ENCODE measurements at regions of chr3 and their contacts with region 1.

Region 1: GRCh38 chr3:50611464-50612233 is at the start of gene CISH:
- DNase-seq: peak; percentile 96 to 98 (median 97)
- ATAC-seq: peak; percentile 80 to 86 (median 82)
- H3K4me3 ChIP-seq: peak within 1 kb of the TSS; percentile 56 to 95 (median 80)
- H3K27ac ChIP-seq: peak within 1 kb of the TSS; percentile 77 to 100 (median 92)
- H3K4me1 ChIP-seq: peaks cover 5 to 81% (median 63%) of the 10 kb centered on the region in 12 donors
- H3K27me3 ChIP-seq: no peaks in the 10 kb centered on the region
- CTCF ChIP-seq: peak; percentile 7 to 59 (median 34)
- POLR2A ChIP-seq: peak; percentile 21 to 56
- total RNA-seq, gene CISH: 10.1 to 57.0 (median 20.3) TPM

Region 2: DNA sequence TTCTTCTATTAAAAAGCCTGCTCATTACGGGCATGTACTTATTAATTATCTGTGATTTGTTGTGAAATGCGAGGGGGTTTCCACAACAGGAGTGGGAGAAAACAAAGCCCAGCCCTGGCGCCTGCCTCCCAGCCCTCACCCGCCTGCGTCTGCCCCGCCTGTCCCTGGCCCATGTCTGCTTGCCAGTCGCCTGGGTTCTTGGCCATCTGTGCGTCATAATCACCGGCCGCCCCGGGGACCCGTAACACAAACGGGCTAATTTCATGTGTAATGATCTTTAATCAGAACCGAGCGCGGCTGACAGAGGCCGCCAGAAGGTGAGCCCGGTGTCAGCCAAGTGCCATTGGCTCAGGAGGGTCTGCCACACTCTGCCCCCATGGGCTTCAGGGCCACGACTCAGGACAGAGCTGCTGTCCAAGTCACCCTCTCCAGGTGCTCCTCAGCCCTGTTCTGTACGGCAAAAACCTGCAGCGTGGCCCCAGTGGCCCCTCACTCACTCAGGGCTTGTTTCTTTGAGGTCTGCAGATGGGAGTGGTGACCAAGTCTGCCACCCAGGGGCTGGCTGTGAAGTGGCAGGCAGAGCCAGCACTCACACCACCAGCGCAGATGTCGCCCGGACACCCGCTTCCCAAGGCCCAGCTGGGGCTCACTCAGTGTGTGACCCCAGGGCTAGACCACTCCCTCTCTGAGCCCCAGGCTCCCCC is 223.5 kb before region 1 on chr3:
- intact Hi-C with region 1: no loop called
- DNase-seq: no peak
- ATAC-seq: no peak
- H3K4me3 ChIP-seq: no peak overlapping the region
- H3K27ac ChIP-seq: no peak overlapping the region
- H3K4me1 ChIP-seq: peaks cover 3 to 31% (median 16%) of the 10 kb centered on the region in 12 donors
- H3K27me3 ChIP-seq: no peaks in the 10 kb centered on the region
- CTCF ChIP-seq: peak in 2 of 12 donors; percentile 7 to 19
- POLR2A ChIP-seq: no peak

Region 3: GRCh38 chr3:50436114-50436674 is 175.5 kb before region 1 on chr3:
- intact Hi-C with region 1: loop called in 4 of 10 experiments (anchors 5 to 10 kb)
- DNase-seq: peak; percentile 52 to 84 (median 63)
- ATAC-seq: peak; percentile 76 to 88 (median 83)
- H3K4me3 ChIP-seq: no peak overlapping the region
- H3K27ac ChIP-seq: no peak overlapping the region
- H3K4me1 ChIP-seq: peaks cover 0 to 6% (median 2%) of the 10 kb centered on the region in 12 donors
- H3K27me3 ChIP-seq: no peaks in the 10 kb centered on the region
- CTCF ChIP-seq: peak; percentile 71 to 93 (median 85)
- POLR2A ChIP-seq: no peak

Region 4: DNA sequence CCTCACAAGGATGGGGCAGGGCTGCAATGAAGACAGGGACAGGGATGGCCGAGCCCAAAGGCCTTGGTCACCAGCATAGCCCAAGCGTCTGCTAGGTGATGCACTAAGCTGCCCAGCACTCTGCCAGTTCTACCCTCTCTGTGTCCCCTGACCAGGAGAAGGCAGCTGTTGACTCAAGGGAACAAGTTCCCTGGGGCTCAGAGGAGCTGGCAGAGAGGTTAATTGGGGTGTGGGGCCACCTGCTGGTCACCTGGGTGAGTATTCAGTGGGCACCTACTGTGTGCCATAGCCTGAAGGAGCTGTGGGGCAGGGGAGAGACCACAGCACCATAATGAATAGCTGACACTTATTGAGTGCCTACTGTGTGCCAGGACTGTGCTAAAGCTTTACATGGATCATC is 41.1 kb after region 1 on chr3:
- intact Hi-C with region 1: loop called in 6 of 10 experiments (anchors 1 to 5 kb)
- DNase-seq: peak in 3 of 5 donors; percentile 41 to 59 (median 56)
- ATAC-seq: peak in 3 of 4 donors; percentile 9 to 40 (median 14)
- H3K4me3 ChIP-seq: no peak overlapping the region
- H3K27ac ChIP-seq: peak overlapping the region in 6 of 12 donors; percentile 0 to 97 (median 84)
- H3K4me1 ChIP-seq: peaks cover 0 to 48% (median 19%) of the 10 kb centered on the region in 12 donors
- H3K27me3 ChIP-seq: no peaks in the 10 kb centered on the region
- CTCF ChIP-seq: peak in 11 of 12 donors; percentile 34 to 60 (median 44)
- POLR2A ChIP-seq: no peak

Region 5: DNA sequence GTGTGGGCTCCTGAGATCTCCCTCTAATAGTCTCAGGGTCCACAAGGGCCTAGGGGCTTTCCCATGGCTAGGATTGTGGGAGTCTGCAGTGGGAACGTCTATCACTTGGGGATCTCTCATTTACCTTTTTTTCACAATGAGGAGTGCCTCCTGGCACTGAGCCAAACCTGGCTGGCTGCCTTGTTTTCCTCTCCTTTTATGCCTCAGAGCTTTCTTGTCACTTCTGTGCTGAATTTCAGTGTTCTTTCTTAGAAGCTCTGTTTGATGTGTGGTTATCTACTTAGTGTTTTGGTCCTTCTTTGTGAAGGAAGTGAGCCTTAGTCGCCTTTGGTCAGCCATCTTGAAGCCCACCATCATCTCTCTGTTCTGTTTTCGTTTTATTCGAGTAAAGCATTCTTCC is 97.0 kb after region 1 on chr3:
- intact Hi-C with region 1: no loop called
- DNase-seq: no peak
- ATAC-seq: no peak
- H3K4me3 ChIP-seq: no peak overlapping the region
- H3K27ac ChIP-seq: no peak overlapping the region
- H3K4me1 ChIP-seq: peaks cover 0 to 10% (median 0%) of the 10 kb centered on the region in 12 donors
- H3K27me3 ChIP-seq: no peaks in the 10 kb centered on the region
- CTCF ChIP-seq: no peak
- POLR2A ChIP-seq: no peak

Region 6: GRCh38 chr3:51371943-51372557 is 760.4 kb after region 1 on chr3:
- intact Hi-C with region 1: loop called in 8 of 10 experiments (anchors 5 kb)
- DNase-seq: no peak
- ATAC-seq: peak in 1 of 4 donors; percentile 17
- H3K4me3 ChIP-seq: no peak overlapping the region
- H3K27ac ChIP-seq: no peak overlapping the region
- H3K4me1 ChIP-seq: no peaks in the 10 kb centered on the region
- H3K27me3 ChIP-seq: no peaks in the 10 kb centered on the region
- CTCF ChIP-seq: peak; percentile 42 to 68 (median 56)
- POLR2A ChIP-seq: no peak

Region 7: GRCh38 chr3:51434746-51435327 is 823.2 kb after region 1 on chr3:
- intact Hi-C with region 1: loop called in 3 of 10 experiments (anchors 1 to 5 kb)
- DNase-seq: peak in 3 of 5 donors; percentile 16 to 30 (median 29)
- ATAC-seq: peak; percentile 61 to 80 (median 75)
- H3K4me3 ChIP-seq: no peak overlapping the region
- H3K27ac ChIP-seq: no peak overlapping the region
- H3K4me1 ChIP-seq: peaks cover 0 to 4% (median 0%) of the 10 kb centered on the region in 12 donors
- H3K27me3 ChIP-seq: no peaks in the 10 kb centered on the region
- CTCF ChIP-seq: peak; percentile 37 to 76 (median 62)
- POLR2A ChIP-seq: no peak